ENCODE measurements at regions of chr14 and their contacts with region 1.

Region 1: GRCh38 chr14:75293920-75294642 is 15.5 kb downstream of the FOS start:
- DNase-seq: peak; percentile 96
- H3K4me3 ChIP-seq: peak overlapping the region; percentile 34 to 78 (median 55)
- H3K27ac ChIP-seq: peak overlapping the region; percentile 88
- H3K4me1 ChIP-seq: peaks cover 16% of the 10 kb centered on the region
- H3K27me3 ChIP-seq: peaks cover 0 to 10% of the 10 kb centered on the region in 2 experiments
- CTCF ChIP-seq: no peak
- POLR2A ChIP-seq: no peak

Region 2: DNA sequence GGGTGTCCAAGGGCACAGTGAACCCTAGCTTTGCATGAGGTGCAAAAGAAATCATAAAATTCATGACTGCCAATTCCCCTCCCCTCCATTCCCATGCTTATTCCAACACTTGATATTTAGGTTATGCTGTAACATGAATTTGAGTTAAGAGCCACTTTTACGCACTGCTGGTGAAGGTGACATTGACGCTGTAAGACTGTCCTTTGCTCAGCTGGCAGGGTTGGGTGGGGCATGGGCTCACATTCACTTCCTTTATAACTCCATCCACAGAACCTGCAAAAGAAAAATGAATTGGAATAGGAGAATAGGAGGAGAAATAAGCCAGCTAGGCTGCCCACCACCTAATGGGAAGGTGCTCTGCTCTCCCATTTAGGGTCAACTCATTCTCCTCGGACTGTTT is 807.9 kb before region 1 on chr14:
- CTCF ChIA-PET with region 1: no interaction called
- POLR2A ChIA-PET with region 1: no interaction called
- dilution Hi-C with region 1: no loop called
- intact Hi-C with region 1: loop called (anchors 2 kb)
- DNase-seq: no peak
- H3K4me3 ChIP-seq: no peak overlapping the region
- H3K27ac ChIP-seq: peak overlapping the region; percentile 33
- H3K4me1 ChIP-seq: peaks cover 51% of the 10 kb centered on the region
- H3K27me3 ChIP-seq: no peaks in the 10 kb centered on the region
- CTCF ChIP-seq: no peak
- POLR2A ChIP-seq: no peak

Region 3: GRCh38 chr14:75132382-75133086 is 161.5 kb before region 1 on chr14:
- CTCF ChIA-PET with region 1: interaction called, 175 read pairs
- POLR2A ChIA-PET with region 1: interaction called, 4 read pairs
- dilution Hi-C with region 1: loop called (anchors 25 kb)
- intact Hi-C with region 1: loop called (anchors 1 kb)
- DNase-seq: peak; percentile 81
- H3K4me3 ChIP-seq: no peak overlapping the region
- H3K27ac ChIP-seq: no peak overlapping the region
- H3K4me1 ChIP-seq: peaks cover 10% of the 10 kb centered on the region
- H3K27me3 ChIP-seq: no peaks in the 10 kb centered on the region
- CTCF ChIP-seq: peak; percentile 38 to 55
- POLR2A ChIP-seq: no peak

Region 4: GRCh38 chr14:75176142-75176820 is 117.8 kb before region 1 on chr14 and contains the start of gene TMED10:
- CTCF ChIA-PET with region 1: interaction called, 3 read pairs
- POLR2A ChIA-PET with region 1: no interaction called
- dilution Hi-C with region 1: no loop called
- intact Hi-C with region 1: loop called (anchors 1 kb)
- DNase-seq: peak; percentile 90
- H3K4me3 ChIP-seq: peak within 1 kb of the TSS; percentile 44 to 92 (median 83)
- H3K27ac ChIP-seq: peak within 1 kb of the TSS; percentile 94
- H3K4me1 ChIP-seq: peaks cover 8% of the 10 kb centered on the region
- H3K27me3 ChIP-seq: no peaks in the 10 kb centered on the region
- CTCF ChIP-seq: no peak
- POLR2A ChIP-seq: peak; percentile 65
- total RNA-seq, gene TMED10: 313 and 338 TPM in 2 replicates

Region 5: GRCh38 chr14:75234173-75235115 is 59.6 kb before region 1 on chr14:
- CTCF ChIA-PET with region 1: interaction called, 4 read pairs
- POLR2A ChIA-PET with region 1: interaction called, 3 read pairs
- dilution Hi-C with region 1: no loop called
- intact Hi-C with region 1: loop called (anchors 2 kb)
- DNase-seq: peak; percentile 92
- H3K4me3 ChIP-seq: no peak overlapping the region
- H3K27ac ChIP-seq: peak overlapping the region; percentile 91
- H3K4me1 ChIP-seq: peaks cover 23% of the 10 kb centered on the region
- H3K27me3 ChIP-seq: no peaks in the 10 kb centered on the region
- CTCF ChIP-seq: no peak
- POLR2A ChIP-seq: no peak